ENCODE measurements at regions of chr10 and their contacts with region 1.

Region 1: DNA sequence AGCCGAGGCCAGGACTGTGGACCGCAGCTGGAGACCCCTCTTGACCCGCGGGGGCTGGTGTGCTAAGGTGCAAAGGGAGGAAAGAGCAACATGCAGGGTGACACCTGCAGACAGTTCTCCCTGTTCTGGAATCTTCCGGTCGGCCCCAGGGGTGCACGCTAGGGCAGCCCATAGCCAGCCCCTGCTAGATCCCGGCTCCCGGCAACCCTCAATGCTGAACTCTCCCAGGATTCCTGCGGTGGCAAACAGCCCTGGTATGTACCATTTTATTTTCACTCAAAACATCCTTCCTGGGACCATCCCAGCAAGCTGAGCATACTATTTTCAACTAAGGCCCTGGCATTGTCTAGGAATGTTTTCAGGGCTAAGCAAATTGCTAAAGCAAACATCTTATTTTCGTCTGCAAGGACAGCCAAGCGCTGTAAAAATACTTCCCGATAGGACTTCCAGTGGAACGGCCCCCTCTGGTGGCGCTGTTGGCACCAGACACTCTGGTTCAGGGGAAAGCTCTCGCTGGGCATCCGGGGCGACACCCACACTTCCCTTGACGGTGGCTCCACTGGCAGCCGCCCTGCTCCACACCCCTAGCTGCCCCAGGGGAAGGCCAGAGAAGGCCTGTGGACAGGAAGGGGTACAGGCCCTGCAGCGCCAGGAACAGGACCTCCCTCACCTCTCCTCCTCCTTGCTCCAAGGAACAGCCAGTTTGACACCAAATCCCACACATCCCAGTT is 99.4 kb downstream of the CTBP2 start:
- DNase-seq: peak; percentile 96
- H3K4me3 ChIP-seq: peak overlapping the region; percentile 13
- CTCF ChIP-seq: peak; percentile 87

Region 2: GRCh38 chr10:124943301-124944092 is 117.5 kb before region 1 on chr10:
- CTCF ChIA-PET with region 1: no interaction called
- POLR2A ChIA-PET with region 1: no interaction called
- DNase-seq: peak; percentile 58
- H3K4me3 ChIP-seq: no peak overlapping the region
- CTCF ChIP-seq: no peak

Region 3: GRCh38 chr10:124992462-124993344 is 68.3 kb before region 1 on chr10:
- CTCF ChIA-PET with region 1: interaction called, 39 read pairs
- POLR2A ChIA-PET with region 1: no interaction called
- DNase-seq: no peak
- H3K4me3 ChIP-seq: no peak overlapping the region
- CTCF ChIP-seq: peak; percentile 47

Region 4: GRCh38 chr10:125000366-125001312 is 60.4 kb before region 1 on chr10:
- CTCF ChIA-PET with region 1: interaction called, 10 read pairs
- POLR2A ChIA-PET with region 1: interaction called, 3 read pairs
- DNase-seq: no peak
- H3K4me3 ChIP-seq: no peak overlapping the region
- CTCF ChIP-seq: peak; percentile 11

Region 5: GRCh38 chr10:125076891-125077541 is 16.0 kb after region 1 on chr10:
- CTCF ChIA-PET with region 1: interaction called, 46 read pairs
- POLR2A ChIA-PET with region 1: no interaction called
- DNase-seq: no peak
- H3K4me3 ChIP-seq: no peak overlapping the region
- CTCF ChIP-seq: no peak

Region 6: GRCh38 chr10:125084191-125084613 is 23.2 kb after region 1 on chr10:
- CTCF ChIA-PET with region 1: interaction called, 35 read pairs
- POLR2A ChIA-PET with region 1: interaction called, 8 read pairs
- DNase-seq: peak; percentile 76
- H3K4me3 ChIP-seq: no peak overlapping the region
- CTCF ChIP-seq: peak; percentile 48

Region 7: DNA sequence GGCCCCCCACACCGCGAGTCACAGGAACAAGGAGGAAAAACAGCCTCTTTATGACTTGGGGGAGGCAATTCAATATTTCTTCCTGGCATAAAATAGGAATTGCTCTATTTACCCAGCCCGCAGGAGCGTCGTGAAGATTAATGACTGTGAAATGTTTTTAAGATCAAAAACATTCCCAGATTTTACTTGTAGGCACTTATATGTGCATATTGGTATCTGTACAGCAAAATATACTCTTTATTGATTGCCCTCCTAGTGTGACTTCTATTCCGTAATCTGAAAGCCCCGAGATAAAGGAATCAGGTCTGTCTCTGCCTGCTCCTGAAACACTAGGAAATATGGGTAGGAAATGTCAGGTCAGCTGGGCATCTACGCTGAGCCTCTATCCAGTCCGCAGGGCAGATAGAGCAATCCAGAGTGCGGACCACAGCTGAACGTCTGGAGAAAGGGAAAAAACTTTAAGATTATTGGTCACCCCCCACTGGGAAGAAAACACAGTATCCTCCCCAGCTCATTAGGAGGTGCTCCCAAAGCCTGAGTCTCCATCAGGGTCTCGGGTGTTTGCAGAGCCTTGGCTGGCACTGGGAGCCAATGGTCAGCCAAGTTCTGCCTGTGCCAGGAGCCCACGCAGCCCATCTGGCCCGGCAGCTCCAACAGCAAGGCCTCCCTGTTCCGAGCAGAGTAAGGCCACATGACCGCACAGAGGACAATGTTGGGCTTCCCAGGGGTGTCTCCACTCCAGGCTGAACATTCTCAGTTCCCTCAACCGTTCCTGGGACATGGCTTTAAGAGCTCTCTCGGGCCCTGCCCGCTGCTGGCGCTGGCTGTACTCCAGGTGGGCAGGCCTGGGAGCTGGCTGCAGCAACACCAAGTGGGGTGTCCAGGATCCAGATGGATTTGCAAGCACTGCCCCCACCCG is 91.7 kb after region 1 on chr10:
- CTCF ChIA-PET with region 1: interaction called, 11 read pairs
- POLR2A ChIA-PET with region 1: no interaction called
- DNase-seq: no peak
- H3K4me3 ChIP-seq: no peak overlapping the region
- CTCF ChIP-seq: no peak

Measured in AG04449 (cell line).